ENCODE measurements at regions of chr12 and their contacts with region 1.

Region 1: DNA sequence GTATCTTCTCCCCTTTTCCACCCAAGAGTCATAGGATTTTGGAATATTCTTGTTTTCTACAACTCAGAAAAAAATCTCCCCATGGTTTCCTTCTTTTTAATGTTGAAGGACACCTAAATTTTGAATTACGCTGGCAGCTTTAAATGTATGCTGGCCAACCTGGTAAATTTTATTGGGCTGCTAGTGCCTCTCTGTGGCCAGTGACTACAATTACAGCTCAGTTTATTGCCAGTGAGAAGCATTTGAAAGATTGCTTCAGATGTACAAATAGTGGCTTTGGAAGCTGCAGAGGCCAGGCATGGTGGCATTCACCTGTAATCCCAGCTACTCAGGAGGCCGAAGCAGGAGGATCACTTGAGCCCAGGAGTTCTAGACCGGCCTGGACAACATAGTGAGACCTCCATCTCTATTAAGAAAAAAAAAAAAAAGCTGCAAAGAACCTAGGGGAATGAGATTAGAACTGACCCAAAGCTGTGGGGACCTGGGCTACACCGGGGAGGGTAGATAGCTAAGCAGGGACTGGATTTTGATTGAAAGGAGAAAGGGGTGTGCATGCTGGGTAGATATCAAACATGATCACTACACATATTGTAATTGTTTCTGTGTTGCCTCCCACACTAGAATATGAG is 7.6 kb upstream of the RAB21 start:
- DNase-seq: peak; percentile 66
- H3K4me3 ChIP-seq: no peak overlapping the region
- H3K27ac ChIP-seq: no peak overlapping the region
- H3K4me1 ChIP-seq: no peaks in the 10 kb centered on the region
- H3K27me3 ChIP-seq: peaks cover 15 to 36% of the 10 kb centered on the region in 2 experiments
- CTCF ChIP-seq: peak; percentile 45 to 62
- POLR2A ChIP-seq: no peak

Region 2: GRCh38 chr12:71216725-71217579 is 530.1 kb before region 1 on chr12:
- CTCF ChIA-PET with region 1: interaction called, 6 read pairs
- POLR2A ChIA-PET with region 1: no interaction called
- dilution Hi-C with region 1: no loop called
- intact Hi-C with region 1: loop called (anchors 2 kb)
- DNase-seq: peak; percentile 34
- H3K4me3 ChIP-seq: no peak overlapping the region
- H3K27ac ChIP-seq: no peak overlapping the region
- H3K4me1 ChIP-seq: no peaks in the 10 kb centered on the region
- H3K27me3 ChIP-seq: peaks cover 0 to 6% of the 10 kb centered on the region in 2 experiments
- CTCF ChIP-seq: peak in 1 of 2 donors; percentile 38
- POLR2A ChIP-seq: no peak

Region 3: DNA sequence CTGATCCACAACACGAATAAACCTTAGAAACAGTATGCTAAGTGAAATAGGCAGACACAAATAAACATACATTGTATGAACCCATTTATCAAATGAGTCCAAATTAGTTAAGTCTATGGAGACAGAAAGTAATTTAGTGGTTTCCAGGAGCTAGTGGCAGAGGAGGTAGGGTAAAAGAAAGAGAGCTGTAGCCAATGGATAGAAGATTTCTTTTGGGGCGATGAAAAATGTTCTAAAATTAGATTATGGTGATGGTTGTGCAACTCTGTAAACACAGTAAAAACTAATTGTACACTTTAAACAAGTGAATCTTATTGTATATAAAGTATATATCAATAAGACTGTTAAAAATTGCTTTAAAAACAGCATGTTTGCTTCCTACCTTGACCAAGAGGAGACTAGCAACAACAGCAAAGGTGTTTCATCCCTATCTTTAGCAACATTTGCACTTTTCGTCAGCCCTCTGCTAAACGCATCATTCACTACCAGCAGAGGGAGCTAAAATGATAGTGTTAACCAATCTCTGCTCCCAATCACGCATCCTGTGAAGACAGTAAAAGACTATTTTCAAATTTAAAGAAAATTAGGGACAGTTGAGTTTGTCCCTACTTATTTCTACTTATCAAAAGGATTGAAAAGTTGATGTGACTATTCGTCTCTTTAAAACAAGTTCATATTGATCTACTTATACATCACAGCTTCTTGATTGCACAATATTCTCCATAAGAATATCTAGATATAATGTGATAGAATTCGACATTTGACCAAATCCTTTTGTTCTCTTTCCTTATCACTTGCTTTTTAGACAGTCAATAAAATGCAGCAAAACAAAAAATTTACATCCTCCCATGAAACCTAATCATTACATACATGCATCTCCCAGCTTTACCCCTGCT is 331.5 kb before region 1 on chr12:
- CTCF ChIA-PET with region 1: interaction called, 189 read pairs
- POLR2A ChIA-PET with region 1: no interaction called
- dilution Hi-C with region 1: no loop called
- intact Hi-C with region 1: loop called (anchors 1 kb)
- DNase-seq: peak; percentile 49
- H3K4me3 ChIP-seq: no peak overlapping the region
- H3K27ac ChIP-seq: no peak overlapping the region
- H3K4me1 ChIP-seq: no peaks in the 10 kb centered on the region
- H3K27me3 ChIP-seq: no peaks in the 10 kb centered on the region
- CTCF ChIP-seq: peak; percentile 55 to 67
- POLR2A ChIP-seq: no peak

Region 4: GRCh38 chr12:71626098-71626497 is 121.0 kb before region 1 on chr12:
- CTCF ChIA-PET with region 1: interaction called, 25 read pairs
- POLR2A ChIA-PET with region 1: no interaction called
- dilution Hi-C with region 1: no loop called
- intact Hi-C with region 1: no loop called
- DNase-seq: peak; percentile 61
- H3K4me3 ChIP-seq: no peak overlapping the region
- H3K27ac ChIP-seq: peak overlapping the region; percentile 64
- H3K4me1 ChIP-seq: peaks cover 19% of the 10 kb centered on the region
- H3K27me3 ChIP-seq: no peaks in the 10 kb centered on the region
- CTCF ChIP-seq: no peak
- POLR2A ChIP-seq: no peak

Region 5: DNA sequence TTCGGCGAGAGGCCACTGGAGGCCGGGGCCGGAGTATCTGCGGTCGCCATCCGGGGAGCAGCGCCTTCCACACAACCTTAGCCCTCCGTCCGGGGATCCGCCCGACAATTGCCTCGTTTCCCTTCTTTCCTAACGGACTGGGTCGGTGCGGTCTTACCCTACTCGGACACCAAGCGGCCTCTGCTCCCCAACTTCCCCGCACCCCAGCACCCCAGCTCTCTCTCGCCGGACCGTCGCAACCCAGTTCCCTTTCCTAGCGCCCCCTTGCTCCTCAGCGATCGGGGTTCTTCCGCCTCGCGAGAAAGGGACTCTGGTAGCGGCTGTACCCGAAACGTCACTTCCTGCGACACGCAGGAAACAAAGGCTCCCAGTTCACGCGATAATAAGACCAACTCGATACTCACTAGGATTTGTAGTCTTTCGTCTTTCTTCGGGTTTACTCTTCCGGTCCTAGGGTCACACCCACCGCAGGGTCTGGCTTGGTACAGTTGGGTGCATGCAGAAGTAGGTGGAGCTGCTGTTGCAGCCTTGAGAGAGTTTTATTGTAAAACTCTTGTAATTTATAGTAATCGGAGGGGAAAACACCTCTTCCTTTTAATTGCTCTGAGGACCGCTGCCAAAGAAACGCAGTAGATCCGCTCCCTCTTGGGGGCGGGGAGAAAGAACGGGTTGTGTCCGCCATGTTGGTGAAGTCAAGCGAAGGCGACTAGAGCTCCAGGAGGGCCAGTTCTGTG is 83.4 kb before region 1 on chr12 and contains the start of gene ZFC3H1:
- CTCF ChIA-PET with region 1: interaction called, 18 read pairs
- POLR2A ChIA-PET with region 1: no interaction called
- dilution Hi-C with region 1: no loop called
- intact Hi-C with region 1: loop called (anchors 2 kb)
- DNase-seq: peak; percentile 99
- H3K4me3 ChIP-seq: peak within 1 kb of the TSS; percentile 81 to 98 (median 92)
- H3K27ac ChIP-seq: peak within 1 kb of the TSS; percentile 56
- H3K4me1 ChIP-seq: peaks cover 17% of the 10 kb centered on the region
- H3K27me3 ChIP-seq: no peaks in the 10 kb centered on the region
- CTCF ChIP-seq: peak in 1 of 2 donors; percentile 31
- POLR2A ChIP-seq: peak; percentile 73
- total RNA-seq, gene ZFC3H1: 47.6 and 60.4 TPM in 2 replicates

Region 6: DNA sequence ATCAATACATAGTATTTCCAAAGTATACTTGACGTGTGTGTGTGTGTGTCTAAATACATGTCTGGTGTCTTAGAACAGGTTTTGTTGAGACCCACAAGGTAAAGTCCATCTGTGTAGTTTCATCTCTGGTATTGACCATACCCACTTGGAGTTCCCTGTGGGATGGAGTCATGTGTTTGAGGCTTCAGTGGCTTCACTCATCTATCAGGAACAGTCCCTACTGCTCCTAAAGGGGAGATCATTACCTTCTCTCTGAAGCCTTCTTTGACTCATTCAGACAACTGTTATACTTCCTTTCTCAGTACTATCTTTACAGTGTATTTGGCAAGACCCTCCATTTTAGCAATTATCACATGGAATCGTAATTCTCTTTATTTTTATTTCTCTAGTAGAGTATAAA is 21.8 kb after region 1 on chr12:
- CTCF ChIA-PET with region 1: interaction called, 11 read pairs
- POLR2A ChIA-PET with region 1: no interaction called
- dilution Hi-C with region 1: no loop called
- intact Hi-C with region 1: no loop called
- DNase-seq: no peak
- H3K4me3 ChIP-seq: no peak overlapping the region
- H3K27ac ChIP-seq: no peak overlapping the region
- H3K4me1 ChIP-seq: no peaks in the 10 kb centered on the region
- H3K27me3 ChIP-seq: no peaks in the 10 kb centered on the region
- CTCF ChIP-seq: no peak
- POLR2A ChIP-seq: no peak

Region 7: DNA sequence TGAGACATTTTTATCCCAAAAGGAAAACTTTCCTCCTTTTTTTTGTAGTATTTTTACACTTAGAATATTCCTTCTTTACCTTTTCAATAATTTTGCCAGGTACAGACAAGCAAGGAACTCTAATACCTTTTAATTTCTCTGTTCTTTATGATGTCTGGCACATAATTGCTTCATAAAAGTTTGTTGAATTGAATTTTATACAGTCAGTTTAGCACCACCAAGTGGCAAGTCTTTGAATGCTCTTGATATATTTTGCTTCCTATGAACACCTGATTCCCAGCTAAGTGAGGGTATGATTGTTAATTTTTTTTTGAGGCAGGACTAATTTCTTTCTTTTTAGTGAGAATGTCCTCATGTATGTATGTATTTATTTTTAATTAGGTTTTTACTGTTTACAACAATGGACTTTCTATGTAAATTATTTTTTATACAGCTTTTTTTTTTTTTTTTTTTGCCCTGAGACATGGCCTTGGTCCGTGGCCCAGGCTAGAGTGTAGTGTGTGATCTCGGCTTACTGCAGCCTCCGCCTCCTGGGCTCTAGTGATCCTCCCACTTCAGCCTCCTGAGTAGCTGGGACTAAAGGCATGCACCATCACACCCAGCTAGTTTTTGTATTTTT is 99.3 kb after region 1 on chr12:
- CTCF ChIA-PET with region 1: interaction called, 10 read pairs
- POLR2A ChIA-PET with region 1: no interaction called
- dilution Hi-C with region 1: no loop called
- intact Hi-C with region 1: no loop called
- DNase-seq: peak; percentile 54
- H3K4me3 ChIP-seq: no peak overlapping the region
- H3K27ac ChIP-seq: no peak overlapping the region
- H3K4me1 ChIP-seq: peaks cover under 1% of the 10 kb centered on the region
- H3K27me3 ChIP-seq: no peaks in the 10 kb centered on the region
- CTCF ChIP-seq: peak; percentile 9 to 45
- POLR2A ChIP-seq: no peak